ENCODE measurements at regions of chr1 and their contacts with region 1.

Region 1: GRCh38 chr1:108719656-108720435 is 7.1 kb downstream of the FNDC7 start:
- DNase-seq: peak; percentile 88
- H3K4me3 Mint-ChIP-seq: peak overlapping the region; percentile 10
- H3K27ac Mint-ChIP-seq: peak overlapping the region; percentile 78
- H3K4me1 Mint-ChIP-seq: peaks cover 17% of the 10 kb centered on the region
- H3K27me3 Mint-ChIP-seq: no peaks in the 10 kb centered on the region
- CTCF ChIP-seq: no peak

Region 2: GRCh38 chr1:108703939-108704900 is 15.6 kb before region 1 on chr1:
- CTCF ChIA-PET with region 1: interaction called, 9 read pairs
- POLR2A ChIA-PET with region 1: interaction called, 30 read pairs
- intact Hi-C with region 1: no loop called
- DNase-seq: peak; percentile 74
- H3K4me3 Mint-ChIP-seq: no peak overlapping the region
- H3K27ac Mint-ChIP-seq: peak overlapping the region; percentile 46
- H3K4me1 Mint-ChIP-seq: peaks cover 19% of the 10 kb centered on the region
- H3K27me3 Mint-ChIP-seq: no peaks in the 10 kb centered on the region
- CTCF ChIP-seq: no peak

Region 3: GRCh38 chr1:108732398-108732797 is 12.6 kb after region 1 on chr1:
- CTCF ChIA-PET with region 1: no interaction called
- POLR2A ChIA-PET with region 1: interaction called, 12 read pairs
- intact Hi-C with region 1: no loop called
- DNase-seq: no peak
- H3K4me3 Mint-ChIP-seq: no peak overlapping the region
- H3K27ac Mint-ChIP-seq: no peak overlapping the region
- H3K4me1 Mint-ChIP-seq: no peaks in the 10 kb centered on the region
- H3K27me3 Mint-ChIP-seq: no peaks in the 10 kb centered on the region
- CTCF ChIP-seq: no peak